Calu3 (cell line): ENCODE measurements at regions of chr19 and their contacts with region 1.

Region 1: DNA sequence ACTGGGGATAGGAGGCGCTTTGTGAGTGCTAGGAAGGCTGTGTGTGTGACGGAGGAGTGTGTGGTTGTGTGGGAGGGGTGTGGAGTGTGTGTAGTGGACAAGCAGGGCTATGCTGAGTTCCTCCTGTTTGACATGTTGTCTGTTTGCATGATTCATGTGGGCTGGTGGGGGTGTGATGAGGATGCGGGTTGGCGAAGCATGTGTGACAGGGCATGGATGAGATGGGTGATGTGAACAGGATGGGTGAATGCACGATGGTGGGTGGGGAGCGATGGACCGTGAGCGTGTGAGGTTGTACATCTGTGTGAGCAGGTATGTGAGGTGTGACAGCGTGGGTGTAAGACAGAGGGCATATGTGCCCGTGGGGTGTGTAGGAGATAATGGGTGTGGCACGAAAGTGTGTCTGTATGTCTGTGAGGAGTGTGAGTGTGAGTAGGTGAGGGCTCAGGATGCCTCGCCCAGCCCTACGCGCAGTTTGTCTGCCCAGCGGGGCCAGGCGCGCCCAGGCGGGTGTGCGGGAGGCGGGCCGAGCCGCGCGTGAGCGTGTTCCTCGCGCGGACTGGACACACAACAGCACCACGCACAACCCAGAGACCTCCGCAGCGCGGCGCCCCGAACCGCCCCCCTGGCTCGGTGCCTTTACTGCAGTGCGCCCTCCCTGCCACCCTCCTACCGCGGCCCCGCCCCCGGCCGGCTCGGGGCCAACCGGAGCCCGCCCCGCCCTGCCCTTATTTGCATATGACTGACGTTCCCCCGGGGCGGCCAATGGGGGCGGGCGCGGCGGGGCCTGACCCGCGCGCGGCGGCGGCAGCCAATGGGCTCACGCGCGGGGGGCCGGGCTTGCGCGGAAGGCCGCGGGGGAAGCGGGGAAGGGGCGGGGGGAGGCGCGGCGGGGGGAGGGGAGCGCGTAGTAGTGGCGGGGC is 14.4 kb downstream of the CIC start:
- DNase-seq: peak; percentile 98
- H3K4me3 Mint-ChIP-seq: no peak overlapping the region
- H3K27ac Mint-ChIP-seq: no peak overlapping the region
- H3K4me1 Mint-ChIP-seq: peaks cover 26% of the 10 kb centered on the region
- H3K27me3 Mint-ChIP-seq: no peaks in the 10 kb centered on the region
- CTCF ChIP-seq: no peak

Region 2: DNA sequence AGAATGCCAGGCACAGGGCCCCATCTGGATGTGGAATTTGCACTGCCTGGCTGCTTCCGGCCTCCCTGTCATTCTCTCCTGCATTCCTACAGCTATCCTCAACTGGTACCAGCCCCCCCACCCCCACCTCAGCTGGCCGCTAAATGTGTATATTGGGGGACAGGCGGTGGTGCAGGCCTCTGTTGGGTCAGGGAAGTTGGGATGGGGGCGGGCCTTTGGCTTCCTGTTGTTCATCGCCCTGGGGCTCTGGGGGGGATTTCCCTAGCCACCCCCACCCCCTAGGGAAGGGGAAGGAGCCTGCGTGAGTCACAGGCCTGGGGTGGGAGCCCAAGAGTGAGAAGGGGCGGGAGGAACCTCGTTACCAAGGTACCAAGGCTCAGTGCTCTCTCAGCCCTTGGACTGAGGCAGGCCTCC is 161.7 kb before region 1 on chr19:
- CTCF ChIA-PET with region 1: no interaction called
- intact Hi-C with region 1: loop called (anchors 10 kb)
- DNase-seq: peak; percentile 90
- H3K4me3 Mint-ChIP-seq: no peak overlapping the region
- H3K27ac Mint-ChIP-seq: no peak overlapping the region
- H3K4me1 Mint-ChIP-seq: peaks cover 46% of the 10 kb centered on the region
- H3K27me3 Mint-ChIP-seq: no peaks in the 10 kb centered on the region
- CTCF ChIP-seq: no peak

Region 3: DNA sequence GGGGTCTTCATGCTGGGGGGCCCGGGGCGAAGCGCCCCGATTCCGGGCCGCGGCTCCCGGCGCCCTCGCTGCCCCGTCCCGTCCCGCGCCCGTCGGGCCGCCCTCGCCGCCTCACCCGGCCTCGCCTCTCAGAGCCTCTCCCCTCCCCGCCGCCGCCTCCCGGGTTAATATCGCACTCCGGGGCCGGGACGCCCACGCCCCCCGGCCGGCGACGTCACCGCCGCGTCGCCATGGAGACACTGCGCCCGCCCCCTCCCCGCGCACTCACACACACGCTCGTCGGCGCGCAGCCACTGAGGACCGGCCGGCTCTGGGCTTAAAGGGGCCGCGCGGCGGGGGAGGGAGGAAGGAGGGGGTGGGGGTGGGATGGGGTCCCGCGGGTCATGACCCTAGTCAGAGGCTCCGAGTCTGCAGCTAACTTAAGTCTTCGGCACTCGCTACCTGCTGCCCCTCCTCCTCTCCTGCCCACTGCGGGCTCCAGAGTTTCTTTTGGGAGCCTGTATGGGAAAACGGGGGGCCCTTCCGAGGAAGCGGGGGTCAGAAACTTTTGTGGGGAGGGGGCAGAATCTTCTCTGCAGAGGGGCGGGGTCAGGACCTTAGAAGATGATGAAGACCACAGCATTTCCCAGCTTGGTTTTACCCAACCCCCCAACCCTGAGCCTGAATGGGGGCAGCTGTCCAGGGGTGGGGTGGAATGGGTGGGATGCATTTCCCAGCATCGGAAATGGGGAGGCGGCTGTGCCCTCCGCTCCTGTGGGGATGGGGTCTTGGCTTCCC is 28.2 kb before region 1 on chr19 and contains the start of gene ERF:
- CTCF ChIA-PET with region 1: interaction called, 11 read pairs
- intact Hi-C with region 1: no loop called
- DNase-seq: peak; percentile 98
- H3K4me3 Mint-ChIP-seq: peak within 1 kb of the TSS; percentile 92
- H3K27ac Mint-ChIP-seq: peak within 1 kb of the TSS; percentile 67
- H3K4me1 Mint-ChIP-seq: peaks cover 34% of the 10 kb centered on the region
- H3K27me3 Mint-ChIP-seq: no peaks in the 10 kb centered on the region
- CTCF ChIP-seq: no peak
- total RNA-seq, gene ERF: 100 and 124 TPM in 2 replicates